ENCODE measurements at regions of chr11 and their contacts with region 1.

Region 1: GRCh38 chr11:121557348-121557747 is 104.6 kb upstream of the SORL1-AS1 start:
- DNase-seq: peak in 1 of 9 experiments; percentile 13
- ATAC-seq: no peak
- H3K4me3 ChIP-seq: no peak overlapping the region
- H3K4me3 Mint-ChIP-seq: no peak overlapping the region
- H3K27ac ChIP-seq: peak overlapping the region in 1 of 2 experiments; percentile 23
- H3K27ac Mint-ChIP-seq: peak overlapping the region; percentile 15
- H3K4me1 ChIP-seq: no peaks in the 10 kb centered on the region
- H3K4me1 Mint-ChIP-seq: peaks cover 21% of the 10 kb centered on the region
- H3K27me3 ChIP-seq: no peaks in the 10 kb centered on the region
- H3K27me3 Mint-ChIP-seq: no peaks in the 10 kb centered on the region
- CTCF ChIP-seq: no peak

Region 2: GRCh38 chr11:121575250-121575962 is 18.1 kb after region 1 on chr11:
- CTCF ChIA-PET with region 1: interaction called, 4 read pairs
- POLR2A ChIA-PET with region 1: no interaction called
- intact Hi-C with region 1: loop called in 1 of 2 experiments (anchors 1 kb)
- DNase-seq: peak in 1 of 9 experiments; percentile 43
- ATAC-seq: no peak
- H3K4me3 ChIP-seq: no peak overlapping the region
- H3K4me3 Mint-ChIP-seq: no peak overlapping the region
- H3K27ac ChIP-seq: no peak overlapping the region
- H3K27ac Mint-ChIP-seq: peak overlapping the region; percentile 70
- H3K4me1 ChIP-seq: no peaks in the 10 kb centered on the region
- H3K4me1 Mint-ChIP-seq: no peaks in the 10 kb centered on the region
- H3K27me3 ChIP-seq: no peaks in the 10 kb centered on the region
- H3K27me3 Mint-ChIP-seq: no peaks in the 10 kb centered on the region
- CTCF ChIP-seq: no peak

Measured in CD8-positive, alpha-beta T cell (primary cell).